Vagina (tissue), 2 donors: ENCODE measurements at regions of chr4 and their contacts with region 1.

Region 1: GRCh38 chr4:17823871-17824669 is 13.3 kb downstream of the NCAPG start:
- DNase-seq: no peak
- H3K4me3 ChIP-seq: no peak overlapping the region
- H3K27ac ChIP-seq: no peak overlapping the region
- H3K4me1 ChIP-seq: no peaks in the 10 kb centered on the region
- H3K27me3 ChIP-seq: no peaks in the 10 kb centered on the region
- CTCF ChIP-seq: no peak
- POLR2A ChIP-seq: no peak

Region 2: DNA sequence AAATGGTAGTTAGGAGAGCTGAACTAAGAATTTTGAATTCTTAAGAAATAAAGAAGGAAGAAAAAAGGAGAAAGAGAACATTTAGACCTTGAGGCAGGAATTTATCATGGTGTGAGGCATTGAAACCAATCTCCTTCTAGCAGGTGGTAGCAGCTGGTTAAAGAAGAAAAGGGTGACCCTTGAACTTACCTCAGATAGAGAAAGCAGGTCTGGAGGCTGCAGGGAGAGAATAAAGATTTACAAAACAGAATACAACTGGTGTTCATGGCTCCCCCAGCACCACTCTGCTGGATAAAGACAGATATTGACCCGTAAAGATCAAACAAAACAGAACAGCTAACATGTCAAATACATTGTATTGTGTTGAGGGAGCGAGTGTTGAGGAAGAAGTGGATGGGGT is 42.7 kb after region 1 on chr4:
- intact Hi-C with region 1: no loop called
- DNase-seq: no peak
- H3K4me3 ChIP-seq: no peak overlapping the region
- H3K27ac ChIP-seq: no peak overlapping the region
- H3K4me1 ChIP-seq: no peaks in the 10 kb centered on the region
- H3K27me3 ChIP-seq: no peaks in the 10 kb centered on the region
- CTCF ChIP-seq: no peak
- POLR2A ChIP-seq: no peak

Region 3: GRCh38 chr4:17968721-17969120 is 144.7 kb after region 1 on chr4:
- intact Hi-C with region 1: no loop called
- DNase-seq: no peak
- H3K4me3 ChIP-seq: no peak overlapping the region
- H3K27ac ChIP-seq: no peak overlapping the region
- H3K4me1 ChIP-seq: no peaks in the 10 kb centered on the region
- H3K27me3 ChIP-seq: no peaks in the 10 kb centered on the region
- CTCF ChIP-seq: no peak
- POLR2A ChIP-seq: no peak

Region 4: GRCh38 chr4:18463987-18464559 is 640.0 kb after region 1 on chr4:
- intact Hi-C with region 1: no loop called
- DNase-seq: no peak
- H3K4me3 ChIP-seq: no peak overlapping the region
- H3K27ac ChIP-seq: no peak overlapping the region
- H3K4me1 ChIP-seq: no peaks in the 10 kb centered on the region
- H3K27me3 ChIP-seq: no peaks in the 10 kb centered on the region
- CTCF ChIP-seq: no peak
- POLR2A ChIP-seq: no peak

Region 5: GRCh38 chr4:18593445-18594002 is 769.5 kb after region 1 on chr4:
- intact Hi-C with region 1: loop called (anchors 5 kb)
- DNase-seq: no peak
- H3K4me3 ChIP-seq: no peak overlapping the region
- H3K27ac ChIP-seq: no peak overlapping the region
- H3K4me1 ChIP-seq: no peaks in the 10 kb centered on the region
- H3K27me3 ChIP-seq: no peaks in the 10 kb centered on the region
- CTCF ChIP-seq: peak in 2 of 3 experiments; percentile 58 to 66
- POLR2A ChIP-seq: no peak